Posterior vena cava (tissue), 2 donors: ENCODE measurements at regions of chr1 and their contacts with region 1.

Region 1: DNA sequence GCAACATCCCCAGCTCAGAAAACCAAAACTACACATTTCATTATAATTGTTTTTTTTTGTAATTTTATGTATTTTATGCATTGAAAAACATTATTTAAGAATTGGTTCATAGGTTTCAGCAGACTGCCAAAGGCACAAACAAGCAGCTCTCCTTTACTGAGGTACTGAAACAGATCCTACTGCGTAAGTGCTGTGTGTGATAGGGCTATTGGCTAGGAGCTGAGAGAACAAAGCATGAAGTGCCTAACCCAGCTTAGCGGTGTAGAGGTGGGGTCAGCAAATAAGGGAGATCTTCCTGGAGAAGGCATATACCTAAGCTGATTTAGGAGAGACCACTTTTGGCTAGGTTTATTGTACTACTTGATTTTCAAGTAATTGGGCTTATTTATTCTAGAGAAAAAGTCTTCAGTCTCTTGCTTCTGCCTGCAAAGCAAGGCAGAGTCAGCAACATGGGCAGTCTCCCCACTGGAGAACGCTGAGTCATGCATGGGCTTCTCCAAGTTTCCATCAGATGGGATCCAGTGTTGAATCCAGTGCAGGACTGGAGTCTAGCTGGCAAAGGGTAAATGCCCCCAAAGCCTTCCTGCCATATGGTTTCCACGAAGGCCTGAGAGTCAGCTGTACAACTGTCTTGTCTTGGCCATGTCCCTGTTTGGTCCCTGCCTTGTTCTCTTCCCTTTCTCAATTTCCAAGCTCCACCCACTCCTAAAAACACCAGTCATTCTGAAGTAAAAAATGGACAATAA is 18.0 kb upstream of the YTHDF2 start:
- DNase-seq: no peak

Region 2: DNA sequence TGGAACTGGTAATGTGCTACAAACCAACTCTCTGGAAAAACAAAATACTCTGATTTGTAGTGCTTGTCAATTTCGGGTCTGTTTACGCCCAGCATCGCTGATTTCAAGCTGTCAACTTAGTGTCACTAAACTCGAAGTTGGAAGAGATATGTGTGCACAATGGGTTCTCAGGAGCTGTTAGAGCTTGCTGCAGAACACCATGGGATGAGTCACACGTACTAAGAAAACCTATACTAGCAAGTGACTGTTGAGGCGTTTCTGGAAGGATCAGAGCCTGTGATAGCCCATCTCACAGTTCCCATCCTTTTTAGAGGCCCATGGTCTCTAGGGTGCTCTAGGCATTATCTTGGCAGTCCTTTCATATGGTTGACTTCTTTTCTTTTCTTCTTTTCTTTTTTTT is 35.9 kb before region 1 on chr1:
- intact Hi-C with region 1: loop called in 1 of 2 experiments (anchors 1 kb)
- DNase-seq: no peak